ENCODE measurements at regions of chr5 and their contacts with region 1.

Region 1: DNA sequence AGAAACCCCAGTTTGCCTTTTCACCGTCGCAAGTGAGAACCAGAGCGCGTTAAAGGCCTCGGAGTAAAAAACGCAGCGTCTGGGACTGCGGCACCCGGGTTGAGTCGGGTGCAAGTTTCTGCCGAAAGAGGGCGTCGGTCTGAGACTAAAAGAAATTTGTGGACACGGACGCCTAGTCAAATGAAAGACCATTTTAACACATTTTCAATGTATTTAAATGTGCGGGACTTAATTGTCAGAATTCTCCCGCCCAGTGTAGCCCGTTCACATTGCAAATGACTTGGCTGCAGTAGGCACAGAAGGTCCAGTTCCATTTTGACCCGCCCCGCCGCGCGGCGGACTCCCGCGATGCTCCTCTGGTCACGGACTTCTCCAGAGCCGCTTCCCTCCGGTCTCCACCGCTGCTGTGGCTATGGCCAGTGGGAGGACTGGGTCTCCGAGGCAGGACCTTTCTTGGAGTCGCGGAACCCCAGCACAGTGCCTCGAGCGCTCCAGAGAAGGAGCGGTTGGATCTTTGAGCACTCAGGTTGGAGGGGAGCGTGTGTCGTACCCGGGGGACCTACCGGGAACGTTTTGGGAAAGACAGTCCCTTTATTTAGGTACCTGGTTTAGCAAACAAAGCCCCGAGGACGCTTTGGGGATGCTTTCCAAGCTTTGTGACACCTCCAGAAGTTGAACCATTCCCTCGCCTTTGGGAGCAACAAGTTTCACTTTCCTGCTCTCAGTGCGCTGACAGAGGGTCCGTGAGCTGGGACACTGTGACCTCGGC is 1.2 kb upstream of the NPR3 start:
- DNase-seq: peak; percentile 71
- H3K4me3 Mint-ChIP-seq: peak overlapping the region; percentile 79
- H3K27ac Mint-ChIP-seq: no peak overlapping the region
- H3K4me1 Mint-ChIP-seq: peaks cover 8% of the 10 kb centered on the region
- H3K27me3 Mint-ChIP-seq: no peaks in the 10 kb centered on the region
- CTCF ChIP-seq: peak; percentile 70

Region 2: DNA sequence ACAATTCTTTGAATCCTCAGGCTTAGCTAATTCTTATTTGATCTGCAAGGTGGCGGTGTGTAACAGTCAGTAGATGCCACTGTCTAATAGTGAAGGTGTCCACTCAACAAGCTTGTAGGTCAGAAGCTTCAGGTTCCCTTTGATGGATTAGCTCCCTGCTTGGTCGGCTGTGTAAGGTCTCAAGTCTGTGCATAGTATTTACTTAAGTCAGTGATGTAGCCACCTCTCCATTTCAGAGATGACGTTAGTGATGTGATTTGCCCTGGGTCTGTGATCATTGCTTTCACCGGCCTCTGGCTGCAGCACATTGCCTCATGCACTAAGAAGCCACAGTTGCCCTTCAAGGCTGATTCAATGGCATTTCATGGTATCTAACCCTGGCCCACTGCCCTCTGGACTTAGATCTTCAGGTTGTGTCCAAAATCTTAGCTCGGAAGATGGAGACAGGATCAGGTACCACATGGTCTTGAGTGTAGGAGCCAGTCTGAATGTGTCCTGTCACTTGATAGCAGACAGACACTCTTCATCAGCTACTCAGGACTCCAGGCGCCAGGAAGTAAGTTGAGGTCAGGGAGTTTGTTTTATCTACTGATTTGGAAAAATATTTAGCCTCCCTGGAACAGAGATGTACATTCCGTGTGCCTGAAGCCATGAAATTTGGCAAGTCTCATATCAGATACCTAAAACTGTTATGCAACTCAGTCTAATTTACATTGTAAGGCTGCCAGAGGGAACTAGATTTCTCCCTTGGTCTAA is 81.7 kb before region 1 on chr5:
- CTCF ChIA-PET with region 1: interaction called, 3 read pairs
- intact Hi-C with region 1: loop called (anchors 5 kb)
- DNase-seq: peak; percentile 20
- H3K4me3 Mint-ChIP-seq: no peak overlapping the region
- H3K27ac Mint-ChIP-seq: no peak overlapping the region
- H3K4me1 Mint-ChIP-seq: no peaks in the 10 kb centered on the region
- H3K27me3 Mint-ChIP-seq: peaks cover 1% of the 10 kb centered on the region
- CTCF ChIP-seq: no peak

Region 3: GRCh38 chr5:32852535-32852934 is 142.6 kb after region 1 on chr5:
- CTCF ChIA-PET with region 1: no interaction called
- intact Hi-C with region 1: loop called (anchors 1 kb)
- DNase-seq: peak; percentile 25
- H3K4me3 Mint-ChIP-seq: no peak overlapping the region
- H3K27ac Mint-ChIP-seq: no peak overlapping the region
- H3K4me1 Mint-ChIP-seq: peaks cover 6% of the 10 kb centered on the region
- H3K27me3 Mint-ChIP-seq: peaks cover 41% of the 10 kb centered on the region
- CTCF ChIP-seq: peak; percentile 11

Region 4: DNA sequence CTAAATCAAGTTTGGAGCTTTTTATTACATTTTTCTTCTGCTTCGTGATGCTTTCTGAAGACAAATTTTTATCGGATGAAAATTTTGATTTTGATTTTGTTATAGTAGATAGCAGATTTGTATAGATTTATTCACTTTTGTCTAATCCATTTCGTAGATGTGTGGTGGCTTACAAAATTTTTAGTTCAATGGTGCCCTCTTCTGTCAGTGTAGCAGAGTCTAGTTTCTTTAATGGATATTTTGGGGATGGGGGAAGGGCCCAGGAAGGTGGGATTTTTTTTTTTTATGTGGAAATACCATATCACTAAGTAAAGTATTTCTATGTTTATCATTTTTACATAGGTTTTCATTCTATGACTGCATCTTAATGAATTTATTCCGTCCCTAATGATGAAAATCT is 470.9 kb after region 1 on chr5:
- CTCF ChIA-PET with region 1: no interaction called
- intact Hi-C with region 1: loop called (anchors 5 kb)
- DNase-seq: peak; percentile 2
- H3K4me3 Mint-ChIP-seq: no peak overlapping the region
- H3K27ac Mint-ChIP-seq: no peak overlapping the region
- H3K4me1 Mint-ChIP-seq: peaks cover 8% of the 10 kb centered on the region
- H3K27me3 Mint-ChIP-seq: no peaks in the 10 kb centered on the region
- CTCF ChIP-seq: no peak

Region 5: DNA sequence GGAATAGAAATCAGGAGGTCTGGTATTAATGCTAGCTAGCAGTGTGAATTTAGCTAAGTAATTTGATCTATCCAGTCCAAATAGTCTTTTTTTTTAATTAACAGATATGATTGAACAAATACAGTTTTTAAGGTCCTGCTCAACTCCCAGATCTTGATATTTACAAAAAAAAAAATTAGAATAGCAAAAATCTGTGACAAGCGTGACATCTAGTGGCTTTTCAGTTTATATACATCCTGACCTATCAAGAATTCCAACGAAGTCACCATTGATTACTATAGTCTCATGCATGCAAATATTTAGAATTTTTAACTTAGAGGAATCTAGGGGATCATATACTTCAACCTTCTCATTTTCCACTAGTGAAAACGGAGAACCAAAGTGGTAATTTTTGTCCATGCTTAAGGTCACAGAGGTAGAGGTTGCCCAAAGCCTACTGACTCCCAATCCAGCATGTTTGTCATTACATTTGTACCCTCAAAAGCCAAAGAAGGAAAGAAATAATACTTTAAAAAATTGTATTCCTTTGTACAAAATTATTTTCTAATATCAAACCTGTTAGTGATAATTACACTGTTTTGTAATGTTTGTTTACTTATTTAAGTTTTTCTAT is 713.2 kb after region 1 on chr5:
- CTCF ChIA-PET with region 1: no interaction called
- intact Hi-C with region 1: loop called (anchors 1 kb)
- DNase-seq: no peak
- H3K4me3 Mint-ChIP-seq: no peak overlapping the region
- H3K27ac Mint-ChIP-seq: no peak overlapping the region
- H3K4me1 Mint-ChIP-seq: no peaks in the 10 kb centered on the region
- H3K27me3 Mint-ChIP-seq: peaks cover 15% of the 10 kb centered on the region
- CTCF ChIP-seq: peak; percentile 17

Measured in Calu3 (cell line).